ENCODE measurements at regions of chr17 and their contacts with region 1.

Region 1: DNA sequence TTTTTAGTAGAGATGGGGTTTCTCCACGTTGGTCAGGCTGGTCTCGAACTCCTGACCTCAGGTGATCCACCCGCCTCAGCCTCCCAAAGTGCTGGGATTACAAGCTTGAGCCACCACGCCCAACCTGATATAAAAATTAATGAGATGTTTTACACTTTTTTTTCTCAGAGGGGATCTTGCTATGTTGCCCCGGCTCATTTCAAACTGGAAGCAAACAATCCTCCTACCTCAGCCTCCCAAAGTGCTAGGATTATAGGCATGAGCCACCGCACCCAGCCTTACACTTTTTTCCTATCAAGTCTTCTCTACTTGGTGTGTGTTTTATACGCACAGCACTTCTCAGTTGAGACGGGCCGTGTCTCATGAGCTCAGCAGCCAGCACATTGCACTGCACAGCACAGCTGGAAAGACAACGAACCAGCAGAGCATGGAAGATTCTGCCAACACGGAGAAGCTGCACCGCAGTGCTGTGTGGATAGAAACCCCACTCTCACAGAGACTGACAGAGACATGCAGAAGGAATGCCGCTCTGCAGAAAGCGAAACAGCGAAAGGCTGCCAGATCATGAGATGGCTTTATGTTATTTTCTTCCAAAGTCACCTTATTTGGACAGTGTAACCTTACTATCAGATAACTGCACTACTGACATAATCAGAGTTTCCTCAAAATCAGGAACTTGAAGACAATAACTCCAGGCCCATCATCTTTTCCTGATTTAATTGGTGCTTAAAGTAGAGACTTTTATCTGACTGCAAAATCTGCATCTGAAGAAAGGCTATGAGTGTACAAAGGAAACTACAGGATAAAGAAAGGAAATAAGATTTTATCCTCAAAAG is 6.5 kb upstream of the QRICH2 start:
- DNase-seq: no peak
- ATAC-seq: peak; percentile 45
- H3K4me3 ChIP-seq: peak overlapping the region; percentile 5
- H3K27ac ChIP-seq: peak overlapping the region; percentile 17
- H3K4me1 ChIP-seq: no peaks in the 10 kb centered on the region
- H3K27me3 ChIP-seq: no peaks in the 10 kb centered on the region
- CTCF ChIP-seq: no peak

Region 2: GRCh38 chr17:76492989-76493501 is 178.4 kb after region 1 on chr17:
- intact Hi-C with region 1: no loop called
- DNase-seq: peak; percentile 87
- ATAC-seq: peak; percentile 81
- H3K4me3 ChIP-seq: peak overlapping the region; percentile 25
- H3K27ac ChIP-seq: peak overlapping the region; percentile 83
- H3K4me1 ChIP-seq: peaks cover 53% of the 10 kb centered on the region
- H3K27me3 ChIP-seq: no peaks in the 10 kb centered on the region
- CTCF ChIP-seq: no peak

Region 3: GRCh38 chr17:76511668-76512365 is 197.2 kb after region 1 on chr17:
- intact Hi-C with region 1: loop called (anchors 5 kb)
- DNase-seq: no peak
- ATAC-seq: no peak
- H3K4me3 ChIP-seq: no peak overlapping the region
- H3K27ac ChIP-seq: no peak overlapping the region
- H3K4me1 ChIP-seq: peaks cover 16% of the 10 kb centered on the region
- H3K27me3 ChIP-seq: peaks cover 6% of the 10 kb centered on the region
- CTCF ChIP-seq: no peak